Activated T-helper 2 cell treated with anti-CD3 and anti-CD28 coated beads, Interferon-gamma antibody, Interleukin-2, Interleukin-4, amounts not matched to agents 10 μg/mL and 5 μg/mL and 100 μg/mL, durations not matched to agents 14 hours and 24 hours and 36 hours (primary cell): ENCODE measurements at regions of chr13 and their contacts with region 1.

Region 1: DNA sequence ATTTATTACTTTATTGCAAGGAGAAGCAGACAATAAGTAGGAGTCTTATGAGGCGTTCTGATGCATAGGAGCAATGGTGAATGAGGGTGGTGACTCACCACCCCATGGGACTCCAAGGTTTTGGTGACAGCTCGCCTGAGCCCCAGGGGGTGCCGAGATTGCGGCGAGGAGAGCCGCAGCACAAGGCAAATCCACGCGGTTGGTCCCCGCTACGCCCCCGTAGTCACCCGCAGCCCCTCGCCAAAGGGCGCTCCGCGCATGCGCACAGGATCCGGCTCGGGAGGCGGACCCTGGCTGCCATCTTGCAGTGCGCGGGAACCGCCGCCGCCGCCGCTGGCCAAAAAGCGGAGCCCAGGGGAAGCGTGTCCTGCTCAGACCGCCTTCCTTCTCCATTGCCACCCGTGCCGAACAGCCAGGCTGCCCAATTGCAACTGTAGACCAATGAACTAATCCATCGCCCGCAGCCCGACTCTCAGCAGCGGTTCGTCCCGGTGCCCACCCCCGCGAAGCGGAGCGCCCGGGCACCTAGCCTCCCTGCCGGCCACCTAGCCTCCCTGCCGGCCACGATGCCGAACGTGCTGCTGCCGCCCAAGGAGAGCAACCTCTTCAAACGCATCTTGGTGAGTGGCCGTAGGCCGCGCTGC is at the start of gene NAA16:
- DNase-seq: peak; percentile 91
- H3K4me3 Mint-ChIP-seq: peak within 1 kb of the TSS; percentile 94
- H3K27ac Mint-ChIP-seq: peak within 1 kb of the TSS; percentile 89
- H3K4me1 Mint-ChIP-seq: peaks cover 29% of the 10 kb centered on the region
- H3K27me3 Mint-ChIP-seq: no peaks in the 10 kb centered on the region
- total RNA-seq, gene NAA16: 27.9 and 28.5 TPM in 2 replicates

Region 2: GRCh38 chr13:41193919-41194824 is 116.9 kb before region 1 on chr13 and contains the start of gene KBTBD7:
- intact Hi-C with region 1: loop called (anchors 2 kb)
- DNase-seq: peak; percentile 88
- H3K4me3 Mint-ChIP-seq: peak within 1 kb of the TSS; percentile 85
- H3K27ac Mint-ChIP-seq: peak within 1 kb of the TSS; percentile 91
- H3K4me1 Mint-ChIP-seq: peaks cover 40% of the 10 kb centered on the region
- H3K27me3 Mint-ChIP-seq: no peaks in the 10 kb centered on the region
- total RNA-seq, gene KBTBD7: 5.1 and 5.8 TPM in 2 replicates

Region 3: DNA sequence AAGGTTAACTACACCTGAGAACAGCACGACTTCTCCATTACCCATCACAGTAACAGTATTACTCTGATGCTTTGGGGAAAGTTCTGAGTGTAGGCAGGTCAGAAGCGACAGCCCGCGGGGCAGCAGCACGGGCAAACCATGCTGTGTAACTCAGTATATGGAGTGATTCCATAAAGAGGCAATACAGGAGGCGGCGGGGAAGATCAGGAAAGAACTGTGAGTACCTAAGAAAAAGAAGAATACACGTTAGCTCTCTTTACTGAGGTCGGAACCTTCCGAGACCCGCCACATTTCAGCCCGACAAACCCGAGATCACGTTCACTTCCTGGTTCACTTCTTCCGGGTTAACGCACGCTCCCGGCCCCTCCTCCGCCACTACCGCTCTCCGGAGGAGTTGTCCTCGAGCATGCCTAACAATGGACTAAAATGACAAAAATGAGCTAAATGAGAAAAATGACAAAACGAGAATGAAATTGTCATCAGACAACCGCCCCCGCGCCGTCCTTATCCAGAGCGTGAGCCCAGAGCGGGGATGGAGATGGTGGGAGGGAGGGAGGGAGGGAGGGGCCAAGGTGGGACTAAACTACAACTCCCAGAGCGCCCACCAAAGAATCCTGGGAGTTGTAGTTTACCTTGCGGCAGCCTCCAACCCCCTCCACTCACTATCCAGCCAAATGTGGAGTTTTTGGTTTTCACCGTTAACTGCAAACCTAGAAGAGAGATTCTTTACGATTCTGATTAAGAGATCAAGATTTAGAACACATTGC is 47.6 kb before region 1 on chr13 and contains the start of gene MTRF1:
- intact Hi-C with region 1: loop called (anchors 1 kb)
- DNase-seq: peak; percentile 78
- H3K4me3 Mint-ChIP-seq: peak within 1 kb of the TSS; percentile 99
- H3K27ac Mint-ChIP-seq: peak within 1 kb of the TSS; percentile 99
- H3K4me1 Mint-ChIP-seq: peaks cover 6% of the 10 kb centered on the region
- H3K27me3 Mint-ChIP-seq: no peaks in the 10 kb centered on the region
- total RNA-seq, gene MTRF1: 18.7 and 19.9 TPM in 2 replicates

Region 4: DNA sequence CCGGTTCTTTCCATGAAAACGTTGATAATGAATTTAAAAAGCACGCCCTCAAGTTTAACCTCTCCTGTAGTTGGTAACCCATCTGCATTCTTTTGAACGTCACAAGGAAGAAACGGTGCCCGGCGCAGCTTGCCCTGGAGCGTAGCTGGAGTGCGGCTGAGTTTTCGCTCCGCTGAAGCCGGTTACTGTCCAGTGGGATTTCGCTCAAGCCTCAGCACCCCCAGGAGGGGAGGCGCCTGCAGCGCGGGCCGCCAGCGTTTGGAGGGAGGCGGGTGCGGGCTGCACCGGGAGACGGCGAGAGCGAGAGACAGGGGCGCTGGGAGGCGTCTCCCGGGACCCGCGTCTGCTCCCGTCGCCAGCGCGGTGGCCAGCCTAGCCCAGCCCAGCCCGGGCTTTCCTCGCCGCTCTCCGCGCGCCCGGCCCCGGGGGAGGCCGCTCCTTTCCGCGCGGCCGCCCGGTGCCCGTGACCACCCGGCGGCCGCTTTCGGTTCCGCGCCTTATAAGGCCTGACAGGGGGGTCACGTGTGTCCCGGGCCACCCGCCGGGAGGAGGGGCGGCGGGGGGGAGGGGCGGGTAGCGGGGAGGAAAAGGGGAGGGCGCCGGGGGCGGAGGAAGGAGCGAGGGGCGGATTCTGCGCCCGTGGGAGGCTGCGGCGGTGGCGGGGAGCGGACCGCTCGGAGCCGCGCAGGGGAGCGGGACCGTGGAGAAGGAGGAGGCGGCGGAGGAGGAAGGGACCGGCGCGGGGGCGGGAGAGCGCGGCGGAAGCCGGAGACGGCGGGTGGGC is 729.1 kb after region 1 on chr13:
- intact Hi-C with region 1: loop called (anchors 10 kb)
- DNase-seq: peak; percentile 80
- H3K4me3 Mint-ChIP-seq: peak overlapping the region; percentile 84
- H3K27ac Mint-ChIP-seq: peak overlapping the region; percentile 67
- H3K4me1 Mint-ChIP-seq: peaks cover 17% of the 10 kb centered on the region
- H3K27me3 Mint-ChIP-seq: peaks cover 38% of the 10 kb centered on the region